ENCODE measurements at regions of chr21 and their contacts with region 1.

Region 1: DNA sequence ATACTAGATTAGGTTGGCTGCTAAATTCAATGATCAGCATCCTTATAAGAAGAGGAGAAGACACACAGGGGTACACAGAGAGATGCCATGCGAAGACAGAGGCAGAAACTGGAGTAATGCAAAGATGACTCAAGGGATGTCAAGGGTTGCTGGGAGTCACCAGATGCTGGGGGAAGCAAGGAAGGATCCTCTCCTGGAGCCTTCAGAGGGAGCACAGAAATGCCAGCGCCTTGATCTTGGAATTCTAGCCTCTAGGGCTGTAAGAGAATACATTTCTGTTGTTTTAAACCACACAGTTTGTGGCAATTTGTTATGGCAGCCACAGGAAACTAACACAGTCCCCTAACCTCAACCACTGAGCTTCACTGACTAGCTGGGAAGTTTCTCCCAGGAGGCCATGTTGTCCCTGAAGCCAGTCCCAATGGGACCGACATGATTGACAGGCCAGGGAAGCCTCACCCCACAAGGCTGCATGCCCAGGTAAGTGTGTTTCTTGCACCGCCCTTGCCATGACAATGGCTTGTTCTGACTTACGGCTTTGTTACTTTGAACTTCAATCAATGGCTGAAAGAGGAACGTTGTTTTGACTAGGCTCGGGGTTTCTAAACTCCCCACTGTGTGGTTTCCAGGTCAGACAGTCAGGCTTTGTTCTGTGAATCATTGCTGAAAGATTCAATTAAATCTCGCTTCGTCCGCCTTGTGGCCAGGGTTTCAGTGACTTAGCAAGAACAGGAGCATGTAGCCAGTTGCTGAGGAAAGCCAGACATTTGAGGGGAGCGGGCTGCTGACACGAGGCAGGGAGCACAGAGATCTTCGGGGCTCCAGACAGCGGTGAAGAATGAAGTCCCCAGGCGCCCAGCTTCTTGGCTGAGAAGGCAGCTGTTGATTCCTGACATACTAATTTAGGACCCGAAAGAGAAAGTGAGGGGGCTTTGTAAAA is 62.3 kb downstream of the RUNX1 start:
- DNase-seq: peak; percentile 82
- H3K4me3 Mint-ChIP-seq: peak overlapping the region; percentile 61
- H3K27ac Mint-ChIP-seq: peak overlapping the region; percentile 77
- H3K4me1 Mint-ChIP-seq: peaks cover 94% of the 10 kb centered on the region
- H3K27me3 Mint-ChIP-seq: no peaks in the 10 kb centered on the region

Region 2: DNA sequence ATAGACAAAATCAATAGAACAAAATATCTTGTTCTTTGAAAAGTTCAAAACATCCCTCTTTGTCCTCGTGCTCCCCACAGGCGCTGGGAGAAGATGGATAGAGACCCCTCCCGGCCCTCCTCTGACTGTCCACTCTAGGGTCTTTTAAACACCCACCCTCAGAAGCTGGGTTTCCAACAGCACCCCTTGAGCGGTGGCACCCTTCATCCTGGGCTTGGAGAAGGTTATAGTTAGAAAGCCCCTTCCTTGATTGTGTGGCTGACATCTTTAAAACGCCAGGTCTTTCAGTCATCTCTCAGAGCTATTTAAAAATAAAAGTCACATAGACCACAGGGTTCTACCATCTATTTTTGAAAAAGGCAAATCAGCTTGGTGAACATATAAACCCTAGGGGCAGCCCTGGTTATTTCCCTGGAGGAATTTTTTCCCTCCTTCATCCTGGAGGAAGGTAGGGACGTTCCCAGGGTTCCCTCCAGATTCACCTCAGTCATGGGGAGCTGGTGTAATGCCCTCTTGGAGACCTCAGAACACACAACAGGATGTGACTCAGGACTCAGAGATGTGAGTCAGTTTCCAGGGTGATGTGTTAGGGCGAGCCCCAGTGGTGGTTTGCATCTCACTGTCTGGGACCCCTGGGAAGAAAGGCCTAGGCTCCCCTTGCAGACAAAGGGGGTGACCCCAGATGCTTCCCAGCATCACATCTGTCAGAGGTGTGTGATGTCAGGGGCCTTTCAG is 179.5 kb before region 1 on chr21:
- CTCF ChIA-PET with region 1: no interaction called
- POLR2A ChIA-PET with region 1: interaction called, 10 read pairs
- DNase-seq: peak; percentile 72
- H3K4me3 Mint-ChIP-seq: peak overlapping the region; percentile 4
- H3K27ac Mint-ChIP-seq: peak overlapping the region; percentile 87
- H3K4me1 Mint-ChIP-seq: peaks cover 88% of the 10 kb centered on the region
- H3K27me3 Mint-ChIP-seq: no peaks in the 10 kb centered on the region

Region 3: GRCh38 chr21:34967509-34968289 is 19.1 kb before region 1 on chr21:
- CTCF ChIA-PET with region 1: interaction called, 8 read pairs
- POLR2A ChIA-PET with region 1: interaction called, 66 read pairs
- DNase-seq: peak; percentile 55
- H3K4me3 Mint-ChIP-seq: peak overlapping the region; percentile 51
- H3K27ac Mint-ChIP-seq: peak overlapping the region; percentile 94
- H3K4me1 Mint-ChIP-seq: peaks cover 89% of the 10 kb centered on the region
- H3K27me3 Mint-ChIP-seq: peaks cover 4% of the 10 kb centered on the region

Region 4: DNA sequence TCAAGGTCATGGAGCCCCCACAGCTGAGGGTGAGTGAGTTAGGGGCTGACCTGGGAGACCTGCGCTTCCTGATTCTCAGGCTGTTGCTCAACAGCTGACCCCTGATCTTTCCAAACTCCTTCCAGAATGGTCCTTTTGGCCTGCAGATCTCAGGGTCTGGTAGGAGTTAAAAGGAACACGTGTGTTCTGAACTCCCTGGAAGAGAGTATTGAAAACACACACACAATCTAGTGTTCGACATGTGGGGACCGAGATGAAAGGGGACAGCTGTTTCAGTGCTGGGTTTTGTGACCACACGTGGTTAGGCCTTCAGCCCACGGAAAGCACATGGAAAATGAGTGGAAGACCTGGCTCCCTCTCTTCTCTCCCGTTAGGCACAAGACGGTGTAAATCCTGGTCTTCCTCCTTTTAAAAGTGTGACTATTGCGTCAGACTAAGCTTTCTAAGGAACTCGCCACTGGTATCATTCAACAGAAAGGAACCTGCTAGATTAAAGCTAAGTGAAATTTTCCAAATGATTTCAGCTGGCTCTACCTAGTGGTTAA is 12.6 kb after region 1 on chr21:
- CTCF ChIA-PET with region 1: interaction called, 7 read pairs
- POLR2A ChIA-PET with region 1: interaction called, 11 read pairs
- DNase-seq: no peak
- H3K4me3 Mint-ChIP-seq: no peak overlapping the region
- H3K27ac Mint-ChIP-seq: no peak overlapping the region
- H3K4me1 Mint-ChIP-seq: peaks cover 59% of the 10 kb centered on the region
- H3K27me3 Mint-ChIP-seq: no peaks in the 10 kb centered on the region

Region 5: DNA sequence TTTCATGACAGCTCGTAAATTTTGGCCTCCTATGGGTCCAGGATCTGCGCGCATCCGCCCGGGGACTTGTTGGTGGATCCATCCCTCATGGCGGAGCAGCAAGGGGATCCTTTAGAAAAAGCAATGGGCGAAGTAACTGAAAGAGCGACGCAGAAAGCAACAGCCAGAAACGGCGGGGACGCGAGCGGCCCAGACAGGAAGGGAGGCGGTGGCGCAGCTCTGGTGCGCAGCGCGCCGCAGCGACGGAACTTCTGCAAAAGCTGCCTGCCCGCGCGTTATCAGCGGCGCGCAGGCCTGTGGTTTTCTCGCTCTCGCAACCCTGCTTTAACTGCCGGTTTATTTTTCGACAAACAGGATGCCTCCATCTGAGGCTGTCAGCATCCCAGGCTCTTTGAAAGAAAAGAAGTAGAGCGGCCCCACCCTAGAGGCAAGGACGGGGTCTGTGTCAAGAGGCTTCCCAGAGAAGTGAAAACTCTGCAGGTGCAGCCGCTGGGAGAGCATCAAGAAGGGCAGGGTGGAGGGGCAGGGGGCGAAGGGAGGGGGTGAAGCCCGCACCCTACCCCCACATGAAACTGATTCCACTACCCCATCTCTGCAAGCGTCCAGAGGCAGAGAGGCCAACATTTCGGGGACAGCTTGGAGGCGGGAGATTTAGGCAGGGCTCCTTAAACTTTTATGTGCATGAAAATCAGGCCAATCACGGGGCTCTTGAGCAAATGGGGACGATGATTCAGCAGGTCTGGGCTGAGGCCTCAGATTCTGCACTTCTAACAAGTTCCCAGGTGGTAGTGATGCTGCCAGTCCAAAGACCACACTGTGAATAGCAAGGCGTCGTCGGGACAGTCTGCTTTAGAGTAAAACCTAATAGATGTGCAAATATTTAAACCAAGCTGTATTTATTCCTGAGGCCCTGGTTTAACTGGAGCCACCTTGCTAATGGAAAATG is 40.1 kb after region 1 on chr21:
- CTCF ChIA-PET with region 1: interaction called, 10 read pairs
- POLR2A ChIA-PET with region 1: interaction called, 81 read pairs
- DNase-seq: peak; percentile 91
- H3K4me3 Mint-ChIP-seq: peak overlapping the region; percentile 69
- H3K27ac Mint-ChIP-seq: peak overlapping the region; percentile 98
- H3K4me1 Mint-ChIP-seq: peaks cover 82% of the 10 kb centered on the region
- H3K27me3 Mint-ChIP-seq: no peaks in the 10 kb centered on the region